Calu3 (cell line): ENCODE measurements at regions of chrX and their contacts with region 1.

Region 1: GRCh38 chrX:135191840-135192239 is 20.6 kb upstream of the CT55 start:
- DNase-seq: no peak
- H3K4me3 Mint-ChIP-seq: no peak overlapping the region
- H3K27ac Mint-ChIP-seq: no peak overlapping the region
- H3K4me1 Mint-ChIP-seq: no peaks in the 10 kb centered on the region
- H3K27me3 Mint-ChIP-seq: peaks cover 90% of the 10 kb centered on the region
- CTCF ChIP-seq: no peak

Region 2: DNA sequence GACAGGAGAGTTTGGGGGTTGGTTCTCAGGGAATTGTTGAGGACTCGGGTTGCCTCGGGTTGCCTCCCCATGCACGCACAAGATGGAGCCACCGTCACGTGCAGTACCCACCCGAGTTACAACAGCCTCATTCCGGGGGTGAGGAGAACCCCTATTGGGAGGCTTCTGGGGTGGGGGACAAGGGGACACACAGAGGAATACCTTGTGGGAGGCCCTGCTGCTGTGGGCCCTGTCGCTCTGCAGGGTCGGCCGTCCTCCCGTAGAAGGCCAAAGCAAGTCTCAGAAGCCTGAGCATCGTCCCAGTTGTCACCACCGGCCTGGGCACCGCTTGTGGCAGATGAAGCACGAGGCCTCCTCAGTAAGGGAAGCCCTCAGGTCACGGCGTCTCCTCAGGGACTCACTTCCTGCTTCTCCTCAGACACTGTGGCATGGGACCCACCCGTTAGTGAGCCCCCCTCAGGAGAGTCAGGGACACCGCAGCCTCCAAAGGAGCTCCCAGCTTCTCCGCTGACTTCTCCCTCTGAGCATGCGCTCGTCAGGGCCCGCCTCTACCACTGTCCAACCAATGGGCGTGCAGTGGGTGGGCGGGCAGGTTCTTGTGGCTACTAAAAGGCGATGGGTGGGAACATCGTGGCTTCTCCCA is 20.8 kb before region 1 on chrX and contains the start of gene CT55:
- CTCF ChIA-PET with region 1: no interaction called
- intact Hi-C with region 1: no loop called
- DNase-seq: no peak
- H3K4me3 Mint-ChIP-seq: no peak within 1 kb of the TSS
- H3K27ac Mint-ChIP-seq: no peak within 1 kb of the TSS
- H3K4me1 Mint-ChIP-seq: peaks cover 8% of the 10 kb centered on the region
- H3K27me3 Mint-ChIP-seq: peaks cover 43% of the 10 kb centered on the region
- CTCF ChIP-seq: no peak
- total RNA-seq, gene CT55: not detected in 2 replicates

Region 3: DNA sequence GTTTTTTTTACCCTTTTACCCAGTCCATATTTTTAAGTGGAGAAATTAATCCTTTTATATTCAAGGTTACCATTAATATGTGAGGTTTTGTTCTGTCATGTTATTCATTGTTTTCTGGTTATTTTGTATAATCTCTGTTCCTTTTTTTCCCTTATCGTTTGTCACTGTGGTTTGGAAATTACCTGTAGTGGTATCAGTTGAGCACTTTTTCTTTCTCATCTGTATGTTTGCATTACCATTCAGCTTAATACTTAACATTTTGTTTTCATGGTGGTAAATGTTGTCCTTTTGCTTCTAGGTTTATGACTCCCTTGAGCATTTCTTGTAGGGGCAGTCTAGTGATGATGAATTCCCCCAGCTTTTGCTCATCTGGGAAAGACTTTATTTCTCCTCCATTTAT is 124.0 kb after region 1 on chrX:
- CTCF ChIA-PET with region 1: no interaction called
- intact Hi-C with region 1: no loop called
- DNase-seq: no peak
- H3K4me3 Mint-ChIP-seq: no peak overlapping the region
- H3K27ac Mint-ChIP-seq: no peak overlapping the region
- H3K4me1 Mint-ChIP-seq: no peaks in the 10 kb centered on the region
- H3K27me3 Mint-ChIP-seq: no peaks in the 10 kb centered on the region
- CTCF ChIP-seq: no peak

Region 4: GRCh38 chrX:135572436-135572835 is 380.6 kb after region 1 on chrX:
- CTCF ChIA-PET with region 1: no interaction called
- intact Hi-C with region 1: loop called (anchors 1 kb)
- DNase-seq: no peak
- H3K4me3 Mint-ChIP-seq: no peak overlapping the region
- H3K27ac Mint-ChIP-seq: no peak overlapping the region
- H3K4me1 Mint-ChIP-seq: no peaks in the 10 kb centered on the region
- H3K27me3 Mint-ChIP-seq: no peaks in the 10 kb centered on the region
- CTCF ChIP-seq: no peak